BJ (cell line): ENCODE measurements at regions of chr9 and their contacts with region 1.

Region 1: DNA sequence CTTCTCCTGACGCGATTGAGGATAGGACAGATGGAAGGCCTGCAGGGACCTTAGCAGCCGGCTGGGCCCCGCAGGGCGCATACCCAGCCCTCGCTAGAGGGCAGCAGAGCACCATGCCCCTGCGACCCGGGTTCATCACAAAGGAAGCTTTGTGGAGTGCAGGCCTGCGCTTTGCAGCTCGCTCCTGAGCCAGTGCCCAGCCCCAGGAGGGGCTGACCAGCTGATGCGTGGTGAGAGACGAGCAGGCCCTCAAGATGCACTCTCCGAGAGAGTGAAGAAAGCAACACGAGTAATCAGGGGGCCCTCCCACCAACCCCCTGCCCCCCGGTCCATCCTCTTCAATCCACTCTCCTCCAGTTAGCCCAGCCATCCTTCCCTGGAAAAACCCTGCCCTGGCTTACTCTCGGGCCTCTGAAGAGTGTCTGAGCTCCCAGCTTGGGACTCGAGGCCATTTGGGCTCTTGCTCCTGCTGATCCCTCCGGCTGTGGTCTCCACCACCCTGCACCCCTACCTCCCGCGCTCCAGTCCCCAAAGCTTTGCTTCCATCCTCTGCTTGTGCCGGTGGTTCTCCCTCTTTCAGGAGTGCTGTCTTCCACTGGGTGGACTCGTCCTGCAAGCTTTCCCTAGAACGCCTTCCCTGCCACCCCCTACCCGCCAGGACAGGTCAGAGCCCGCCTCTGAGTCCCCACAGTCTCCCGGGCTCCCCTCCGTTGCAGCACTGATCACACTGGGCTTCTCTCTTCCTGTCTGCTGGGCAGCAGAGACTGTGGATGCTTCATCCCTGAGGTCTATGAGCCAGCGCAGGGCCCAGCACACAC is 9.1 kb upstream of the KIF12 start:
- DNase-seq: no peak
- H3K4me3 ChIP-seq: no peak overlapping the region
- H3K27me3 ChIP-seq: 0 out of 2 replicates have a peak, but pooled peaks cover 1% of the 10 kb centered on the region
- CTCF ChIP-seq: peak; percentile 100

Region 2: DNA sequence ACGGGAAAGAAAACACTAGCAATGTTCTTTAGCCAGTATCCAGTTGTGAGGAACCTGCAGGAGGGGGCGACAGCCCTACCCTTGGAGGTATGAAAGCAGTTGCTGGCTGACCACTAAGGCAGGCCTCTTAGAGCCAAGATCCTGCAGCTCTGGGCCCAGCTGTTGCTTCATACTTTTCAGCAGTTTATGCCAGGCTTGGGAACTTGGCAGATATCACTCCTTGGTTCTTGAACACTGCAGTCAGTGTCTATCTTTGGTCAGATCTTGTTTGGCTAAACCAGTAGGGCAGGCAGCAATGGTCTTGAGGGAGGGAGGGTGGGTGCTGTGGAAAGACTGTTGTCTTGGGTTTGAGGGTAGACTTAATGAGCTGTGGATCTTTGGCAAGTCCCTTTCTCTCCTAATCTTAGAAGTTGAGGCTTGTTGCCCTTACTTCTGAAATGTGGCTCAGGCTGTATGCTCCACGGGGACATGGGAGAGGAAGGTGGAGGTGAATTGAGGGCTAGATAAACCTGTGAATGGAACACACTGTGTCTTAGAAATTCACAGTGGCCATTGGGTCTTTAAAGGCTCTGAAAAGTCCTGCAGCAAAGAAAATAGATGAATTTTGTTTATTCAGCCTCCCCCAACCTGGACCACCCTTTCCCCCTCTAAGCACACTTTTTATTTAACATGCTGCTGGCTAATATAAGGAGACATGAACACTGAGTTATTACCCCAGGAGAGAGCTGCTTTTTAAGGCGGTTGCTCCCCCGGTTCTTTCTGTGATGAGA is 194.6 kb before region 1 on chr9:
- CTCF ChIA-PET with region 1: no interaction called
- POLR2A ChIA-PET with region 1: no interaction called
- DNase-seq: no peak
- H3K4me3 ChIP-seq: no peak overlapping the region
- H3K27me3 ChIP-seq: no peaks in the 10 kb centered on the region
- CTCF ChIP-seq: no peak

Region 3: DNA sequence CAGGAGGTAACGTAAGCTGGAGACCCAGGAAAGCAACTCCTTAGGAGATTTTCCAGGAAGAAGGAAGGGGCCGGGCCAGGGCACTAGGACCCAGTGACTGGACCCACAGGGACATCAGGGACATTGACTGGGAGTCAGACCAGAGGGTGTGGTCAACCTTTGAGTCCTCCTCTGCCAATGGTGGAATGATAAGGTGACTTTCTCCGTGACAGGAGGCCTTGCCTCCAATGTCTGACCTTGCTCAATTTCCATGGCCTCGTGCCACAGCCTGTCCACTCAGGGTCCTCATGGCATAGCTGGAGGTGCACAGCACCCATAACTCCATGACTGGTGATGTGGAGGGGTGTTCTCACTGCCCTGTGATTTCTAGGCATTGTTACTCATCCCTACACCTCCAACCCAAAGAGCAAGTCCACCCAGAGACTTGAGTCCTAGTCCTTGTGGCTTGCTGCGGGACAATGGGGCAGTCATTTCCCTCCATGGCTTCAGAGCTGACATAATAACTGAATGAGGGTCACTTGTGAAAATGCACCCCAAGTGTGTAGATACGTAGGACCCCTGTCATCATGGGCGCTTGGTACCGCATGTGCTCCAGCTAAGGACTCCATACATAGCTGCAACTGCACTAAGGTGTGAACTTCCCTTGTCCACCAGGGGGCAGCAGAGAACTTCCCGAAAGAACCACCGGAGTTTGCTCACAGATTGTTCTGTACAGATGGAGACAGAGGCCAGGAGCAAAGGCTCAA is 26.0 kb before region 1 on chr9:
- CTCF ChIA-PET with region 1: interaction called, 30 read pairs
- POLR2A ChIA-PET with region 1: interaction called, 3 read pairs
- DNase-seq: peak; percentile 24
- H3K4me3 ChIP-seq: no peak overlapping the region
- H3K27me3 ChIP-seq: peaks cover 4% of the 10 kb centered on the region
- CTCF ChIP-seq: peak; percentile 90

Region 4: GRCh38 chr9:114131808-114132549 is 23.8 kb after region 1 on chr9:
- CTCF ChIA-PET with region 1: interaction called, 14 read pairs
- POLR2A ChIA-PET with region 1: no interaction called
- DNase-seq: no peak
- H3K4me3 ChIP-seq: no peak overlapping the region
- H3K27me3 ChIP-seq: peaks cover 34% of the 10 kb centered on the region
- CTCF ChIP-seq: no peak

Region 5: GRCh38 chr9:114225561-114226212 is 117.5 kb after region 1 on chr9:
- CTCF ChIA-PET with region 1: interaction called, 10 read pairs
- POLR2A ChIA-PET with region 1: no interaction called
- DNase-seq: no peak
- H3K4me3 ChIP-seq: no peak overlapping the region
- H3K27me3 ChIP-seq: no peaks in the 10 kb centered on the region
- CTCF ChIP-seq: no peak

Region 6: DNA sequence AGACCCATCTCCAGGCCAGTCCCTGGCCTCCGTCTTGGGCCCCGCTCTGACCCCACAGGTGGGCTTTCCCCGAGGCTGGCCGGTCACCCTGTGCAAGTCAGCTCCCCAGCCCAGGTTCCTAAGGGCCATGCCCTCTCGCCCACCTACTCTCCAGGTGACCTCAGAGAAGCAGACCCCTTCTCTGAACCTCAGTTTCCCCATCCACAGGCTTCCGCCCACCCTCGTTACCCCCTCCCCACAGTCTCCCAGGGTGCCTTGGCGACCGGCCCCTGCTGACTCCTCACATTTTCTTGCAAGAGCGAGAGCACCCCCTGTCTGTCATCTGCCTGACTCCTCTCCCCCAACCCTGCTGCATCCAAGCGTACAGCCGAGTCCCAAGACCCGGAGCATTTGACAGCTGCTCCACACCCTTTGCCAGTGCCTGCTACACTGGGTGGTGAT is 163.4 kb after region 1 on chr9:
- CTCF ChIA-PET with region 1: interaction called, 14 read pairs
- POLR2A ChIA-PET with region 1: no interaction called
- DNase-seq: no peak
- H3K4me3 ChIP-seq: no peak overlapping the region
- H3K27me3 ChIP-seq: no peaks in the 10 kb centered on the region
- CTCF ChIP-seq: no peak

Region 7: DNA sequence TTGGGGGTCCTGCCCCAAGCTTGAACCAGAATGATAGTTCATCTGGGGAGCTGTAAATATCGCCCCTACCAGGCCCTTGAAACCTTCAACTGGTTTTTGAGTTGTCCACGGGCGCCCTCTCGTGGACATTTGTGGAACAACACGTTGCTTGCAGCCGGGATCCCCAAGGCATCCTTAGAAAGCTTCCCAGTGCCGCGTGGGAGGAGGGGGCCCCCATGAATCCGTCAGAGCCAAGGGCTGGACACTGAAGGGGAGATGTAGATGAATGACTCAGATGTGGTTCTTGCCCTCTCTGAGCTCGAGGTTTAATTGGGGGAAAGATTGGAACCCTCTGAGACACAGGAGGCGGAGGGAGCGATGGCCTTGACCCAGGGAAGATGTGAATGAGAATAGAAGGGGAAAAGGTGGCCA is 182.8 kb after region 1 on chr9:
- CTCF ChIA-PET with region 1: interaction called, 151 read pairs
- POLR2A ChIA-PET with region 1: interaction called, 7 read pairs
- DNase-seq: no peak
- H3K4me3 ChIP-seq: no peak overlapping the region
- H3K27me3 ChIP-seq: no peaks in the 10 kb centered on the region
- CTCF ChIP-seq: peak; percentile 82